AG04450 (cell line): ENCODE measurements at regions of chr16 and their contacts with region 1.

Region 1: GRCh38 chr16:15960124-15960971 is 10.9 kb downstream of the ABCC1 start:
- DNase-seq: no peak
- H3K4me3 ChIP-seq: no peak overlapping the region
- H3K27ac ChIP-seq: peak overlapping the region; percentile 52
- H3K27me3 ChIP-seq: no peaks in the 10 kb centered on the region
- CTCF ChIP-seq: no peak

Region 2: DNA sequence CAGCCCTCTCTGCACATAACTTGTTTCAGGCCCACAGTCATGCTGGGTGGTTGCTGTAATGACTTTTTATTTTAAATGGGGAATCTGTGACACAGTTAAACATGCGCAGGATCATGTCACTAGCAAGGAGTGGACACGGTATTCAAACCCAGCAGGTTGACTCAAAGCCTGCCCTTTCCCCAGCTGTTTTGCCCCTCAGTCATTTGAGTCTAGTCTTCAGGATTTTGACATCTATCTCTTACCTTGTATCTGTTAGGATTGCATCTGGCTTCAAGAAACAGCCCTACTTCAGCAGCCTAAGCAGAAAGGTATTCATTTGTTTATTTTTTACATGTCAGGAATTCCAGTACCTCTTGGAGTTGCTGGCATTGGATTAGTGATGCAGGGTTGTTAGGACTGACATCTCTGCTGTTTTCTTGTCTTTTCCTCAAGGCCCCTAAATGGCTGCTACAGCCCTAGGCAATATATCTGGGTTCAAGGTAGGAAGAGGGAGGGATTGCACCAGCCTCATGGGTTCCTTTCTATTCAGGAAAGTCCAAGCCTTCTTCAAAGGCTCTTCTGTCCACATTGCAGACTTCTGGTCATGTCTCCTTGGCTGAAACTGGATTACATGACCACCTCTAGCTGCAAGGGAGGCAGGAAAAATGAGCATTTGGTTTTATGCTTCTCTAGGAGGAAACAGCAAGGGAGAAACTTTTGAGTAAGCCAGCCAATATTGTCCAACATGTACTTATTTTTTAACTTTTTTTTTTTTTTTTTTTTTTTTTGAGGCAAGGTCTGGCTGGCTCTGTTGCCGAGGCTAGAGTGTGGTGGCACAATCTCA is 11.9 kb after region 1 on chr16:
- CTCF ChIA-PET with region 1: no interaction called
- POLR2A ChIA-PET with region 1: interaction called, 15 read pairs
- DNase-seq: no peak
- H3K4me3 ChIP-seq: no peak overlapping the region
- H3K27ac ChIP-seq: peak overlapping the region; percentile 82
- H3K27me3 ChIP-seq: no peaks in the 10 kb centered on the region
- CTCF ChIP-seq: no peak

Region 3: DNA sequence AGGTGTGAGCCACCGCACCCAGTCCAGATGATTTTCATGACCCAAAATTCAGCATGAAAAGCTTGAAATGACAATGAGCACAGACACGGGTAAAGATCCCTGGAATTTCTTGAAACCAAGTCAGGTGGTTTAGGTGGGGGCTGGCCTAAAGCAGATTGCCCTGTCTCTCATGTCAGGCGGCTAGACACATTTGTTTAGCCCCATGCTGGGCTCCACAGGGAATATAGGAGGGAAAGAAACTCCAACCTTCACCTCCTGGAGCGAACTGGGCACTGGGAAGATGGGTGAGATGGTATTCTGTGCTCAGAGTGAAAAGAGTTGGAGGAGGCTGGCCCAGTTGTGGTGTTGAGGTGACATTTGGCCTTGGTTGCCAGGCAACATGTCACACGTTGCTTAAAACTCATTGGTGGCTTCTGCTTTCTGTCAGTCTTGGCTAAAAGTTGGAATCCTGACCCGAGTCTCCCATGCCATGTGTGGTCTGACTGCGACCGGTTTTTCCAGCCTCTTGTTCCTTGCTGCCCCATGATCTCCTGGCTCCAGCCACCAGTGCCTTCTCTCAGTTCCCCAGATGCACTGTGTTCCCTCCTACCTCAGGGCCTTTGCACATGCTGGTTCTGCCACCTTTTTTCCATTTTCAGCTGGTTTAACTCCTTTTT is 149.2 kb after region 1 on chr16:
- CTCF ChIA-PET with region 1: no interaction called
- POLR2A ChIA-PET with region 1: no interaction called
- DNase-seq: no peak
- H3K4me3 ChIP-seq: no peak overlapping the region
- H3K27ac ChIP-seq: no peak overlapping the region
- H3K27me3 ChIP-seq: no peaks in the 10 kb centered on the region
- CTCF ChIP-seq: no peak